Left cardiac atrium (tissue), 4 donors: ENCODE measurements at regions of chr5 and their contacts with region 1.

Region 1: DNA sequence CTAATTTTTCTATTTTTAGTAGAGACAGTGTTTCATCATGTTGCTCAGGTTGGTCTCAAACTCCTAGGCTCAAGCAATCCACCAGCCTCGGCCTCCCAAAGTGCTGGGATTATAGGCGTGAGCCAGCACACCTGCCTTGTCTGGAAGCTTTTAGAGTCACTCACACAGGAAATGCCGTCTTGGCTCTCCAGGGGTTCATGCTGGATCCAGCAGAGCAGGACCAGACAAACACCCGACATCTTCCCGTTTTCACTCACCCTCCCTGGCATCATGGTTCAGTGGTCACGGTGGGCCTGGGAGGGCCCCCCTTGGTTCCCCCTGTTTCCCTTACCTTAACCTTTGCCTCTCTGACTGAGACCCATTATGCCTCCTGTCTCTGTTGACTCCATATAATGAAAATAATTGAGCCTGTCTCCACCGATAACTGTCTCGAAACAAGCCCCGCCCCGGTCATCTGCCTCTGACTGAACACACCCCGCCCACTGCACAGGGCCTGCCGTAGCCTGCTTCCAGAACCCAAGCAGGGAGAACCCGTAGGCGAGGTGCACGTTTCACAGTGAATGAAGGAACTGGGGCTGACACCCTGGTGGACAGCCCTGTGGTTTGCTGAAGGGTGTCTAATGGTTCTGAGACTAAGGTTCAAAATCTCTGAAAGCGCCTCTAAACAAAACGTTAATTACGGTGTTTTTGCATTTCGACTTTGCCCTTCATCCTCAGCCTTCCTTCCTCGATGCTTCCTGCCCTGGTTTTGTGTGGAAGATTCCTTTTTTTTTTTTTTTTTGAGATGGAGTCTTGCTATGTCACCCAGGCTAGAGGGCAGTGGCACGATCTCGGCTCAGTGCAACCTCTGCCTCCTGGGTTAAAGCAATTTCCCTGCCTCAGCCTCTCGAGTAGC is 39.7 kb upstream of the SPRY4 start:
- DNase-seq: peak; percentile 42
- ATAC-seq: peak in 1 of 2 donors; percentile 45

Region 2: GRCh38 chr5:142012792-142013388 is 351.6 kb before region 1 on chr5 and contains the start of gene GNPDA1:
- intact Hi-C with region 1: no loop called
- DNase-seq: peak; percentile 87
- ATAC-seq: peak; percentile 92 to 98
- total RNA-seq, gene GNPDA1: 17.3 to 25.7 TPM

Region 3: DNA sequence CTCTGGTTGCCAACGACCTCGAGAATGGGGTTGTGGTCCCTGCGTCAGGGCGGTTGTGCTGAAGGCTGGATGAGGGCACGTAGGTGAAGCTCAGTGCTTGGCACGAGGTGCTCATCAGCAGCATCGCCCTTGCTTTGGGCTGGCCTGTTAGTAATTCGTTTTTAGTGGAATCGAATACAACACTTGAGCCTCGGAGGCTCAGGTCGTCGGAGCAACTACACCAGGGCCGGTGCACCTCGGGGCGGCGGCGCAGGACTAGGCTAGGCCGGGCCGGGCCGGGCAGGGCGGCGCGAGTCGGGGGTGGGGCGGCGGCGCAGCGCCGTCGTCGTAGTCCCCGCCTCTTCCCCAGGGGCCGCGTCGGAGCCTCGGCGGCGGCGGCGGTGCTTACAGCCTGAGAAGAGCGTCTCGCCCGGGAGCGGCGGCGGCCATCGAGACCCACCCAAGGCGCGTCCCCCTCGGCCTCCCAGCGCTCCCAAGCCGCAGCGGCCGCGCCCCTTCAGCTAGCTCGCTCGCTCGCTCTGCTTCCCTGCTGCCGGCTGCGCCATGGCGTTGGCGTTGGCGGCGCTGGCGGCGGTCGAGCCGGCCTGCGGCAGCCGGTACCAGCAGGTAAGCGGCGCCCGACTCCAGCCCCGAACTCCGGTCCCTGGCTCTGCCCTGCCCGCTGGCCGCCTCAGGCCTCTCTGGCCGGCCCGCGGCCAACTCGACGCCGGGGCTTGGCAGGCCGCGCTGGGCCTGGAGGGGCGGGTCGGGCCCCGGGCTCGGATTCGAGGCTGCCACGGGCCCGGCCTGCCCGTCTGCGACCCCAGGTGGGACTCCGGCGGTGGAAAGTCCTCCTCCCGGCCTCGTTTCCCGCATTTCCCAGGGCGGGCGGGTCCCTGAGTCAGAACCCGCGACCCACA is 255.8 kb before region 1 on chr5 and contains the start of gene NDFIP1:
- intact Hi-C with region 1: no loop called
- DNase-seq: peak; percentile 89
- ATAC-seq: peak; percentile 99
- total RNA-seq, gene NDFIP1: 54.9 to 63.6 TPM

Region 4: DNA sequence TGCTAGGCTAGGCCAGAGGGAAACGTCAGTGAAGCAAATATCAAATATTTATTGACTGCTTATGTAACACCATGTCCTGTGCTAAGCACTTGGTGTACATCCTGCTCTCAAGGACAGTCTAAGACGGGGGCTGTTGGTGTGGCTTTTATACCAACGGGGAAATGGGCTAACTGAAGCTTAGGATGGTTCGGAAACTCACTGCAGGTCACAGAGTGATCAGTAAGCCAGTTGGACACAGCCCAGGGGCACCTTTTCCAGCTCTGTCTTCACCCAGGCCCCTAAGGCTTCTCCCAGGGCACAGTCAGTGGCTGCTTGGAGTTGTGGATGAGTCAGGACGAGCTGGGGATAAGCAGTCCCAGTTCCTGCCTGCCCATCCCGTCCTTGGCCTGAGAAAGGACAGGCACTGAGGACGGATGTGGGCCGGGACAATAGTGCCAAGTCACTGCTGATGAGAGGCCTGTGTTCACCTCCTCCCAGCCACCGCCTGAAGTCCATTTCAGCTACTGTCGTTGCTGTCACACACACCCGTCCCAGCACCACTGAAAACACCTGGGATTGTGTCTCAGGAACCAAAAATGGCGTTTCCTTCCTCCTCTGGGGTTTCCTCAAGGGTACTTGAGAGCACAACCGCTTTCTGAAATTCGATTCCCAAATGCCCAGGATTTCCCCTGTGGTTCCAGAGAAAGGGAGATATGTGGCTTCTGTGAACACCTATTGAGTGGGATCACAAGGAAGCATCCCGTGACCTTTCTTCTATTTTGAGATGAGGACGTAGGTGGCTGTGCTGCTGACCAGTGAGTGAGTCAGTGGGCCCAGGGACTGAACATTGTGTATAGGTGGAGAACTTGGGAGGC is 22.1 kb before region 1 on chr5:
- intact Hi-C with region 1: no loop called
- DNase-seq: no peak
- ATAC-seq: peak; percentile 38 to 44

Region 5: GRCh38 chr5:142426129-142427014 is 61.9 kb after region 1 on chr5:
- intact Hi-C with region 1: loop called in 1 of 2 experiments (anchors 10 kb)
- DNase-seq: peak; percentile 77
- ATAC-seq: peak; percentile 63 to 65

Region 6: DNA sequence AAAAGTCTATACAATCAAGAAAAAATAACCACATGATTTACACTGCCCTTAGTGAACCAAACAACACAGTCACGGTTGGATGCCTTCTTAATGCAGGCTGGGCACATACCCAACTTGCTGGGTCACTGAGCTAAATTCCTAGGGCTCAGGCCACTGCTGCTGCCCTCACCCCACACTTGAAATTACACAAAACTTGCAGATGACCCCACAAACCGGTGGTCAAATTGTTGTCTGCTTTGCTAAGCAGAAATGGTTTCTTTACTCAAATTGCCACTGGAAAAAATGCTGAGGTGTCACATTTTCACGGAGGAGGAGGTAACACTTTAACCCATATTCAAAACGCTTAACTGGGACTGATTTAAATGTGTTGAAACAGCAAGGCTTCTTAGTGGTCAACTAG is 1509.8 kb after region 1 on chr5:
- intact Hi-C with region 1: no loop called
- DNase-seq: no peak
- ATAC-seq: no peak